Gastrocnemius medialis (tissue), 4 donors: ENCODE measurements at regions of chr5 and their contacts with region 1.

Region 1: GRCh38 chr5:90264689-90265544 is 144.6 kb downstream of the CETN3 start:
- DNase-seq: peak; percentile 15 to 18
- ATAC-seq: no peak
- H3K4me3 ChIP-seq: no peak overlapping the region
- H3K27ac ChIP-seq: no peak overlapping the region
- H3K4me1 ChIP-seq: peaks cover 0 to 4% of the 10 kb centered on the region in 2 donors
- H3K27me3 ChIP-seq: no peaks in the 10 kb centered on the region
- CTCF ChIP-seq: peak; percentile 49 to 89 (median 69)
- POLR2A ChIP-seq: no peak

Region 2: GRCh38 chr5:88718736-88719135 is 1546.2 kb before region 1 on chr5:
- in situ Hi-C with region 1: loop called in 3 of 4 experiments (anchors 10 to 25 kb)
- intact Hi-C with region 1: no loop called
- DNase-seq: no peak
- ATAC-seq: no peak
- H3K4me3 ChIP-seq: no peak overlapping the region
- H3K27ac ChIP-seq: no peak overlapping the region
- H3K4me1 ChIP-seq: no peaks in the 10 kb centered on the region
- H3K27me3 ChIP-seq: no peaks in the 10 kb centered on the region
- CTCF ChIP-seq: no peak
- POLR2A ChIP-seq: no peak